HAP-1 (cell line): ENCODE measurements at regions of chr1 and their contacts with region 1.

Region 1: DNA sequence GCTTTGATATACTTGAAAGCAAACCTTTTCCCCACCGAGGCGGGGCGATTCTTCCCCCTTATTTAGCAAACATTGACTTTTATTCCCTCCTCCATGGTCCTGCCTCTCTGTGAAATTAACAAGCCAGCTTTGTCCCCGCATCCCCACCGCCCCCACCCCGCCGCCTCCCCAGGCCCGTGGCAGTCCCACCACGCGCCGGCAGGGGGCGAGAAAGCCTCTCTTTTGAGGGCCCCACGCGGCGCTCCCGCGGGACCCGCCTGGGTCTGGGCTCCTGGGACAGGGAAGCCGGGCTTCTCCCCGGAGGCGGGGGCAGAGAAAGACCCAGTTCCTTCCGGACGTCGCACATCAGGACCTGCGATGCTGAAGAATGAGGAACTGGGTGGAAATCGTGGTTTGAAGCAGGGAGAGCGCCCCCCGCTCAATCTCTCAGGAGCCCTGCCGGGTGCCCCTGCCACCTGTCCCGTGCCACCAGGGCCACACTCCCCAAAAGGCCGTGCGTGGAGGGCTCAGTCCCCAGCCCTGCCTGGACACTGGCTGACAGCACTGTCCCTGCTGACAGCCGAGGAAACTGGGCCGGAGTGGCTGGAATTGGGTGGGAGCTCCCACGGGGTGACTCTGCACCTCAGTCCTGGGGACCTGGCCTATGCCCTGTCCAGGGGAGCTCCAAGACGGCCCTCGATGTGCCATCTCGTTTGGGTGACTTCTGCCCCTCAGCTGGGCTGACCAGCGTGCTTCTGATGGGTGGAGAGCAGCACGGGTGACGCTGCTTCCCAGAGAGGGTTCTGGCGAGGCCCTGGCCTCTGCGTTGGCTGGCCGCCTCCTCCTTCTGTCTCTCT is 8.6 kb upstream of the ACTRT2 start:
- DNase-seq: peak; percentile 19 to 82
- H3K4me3 ChIP-seq: no peak overlapping the region
- H3K4me1 ChIP-seq: no peaks in the 10 kb centered on the region
- H3K27me3 ChIP-seq: peaks cover 17% of the 10 kb centered on the region

Region 2: GRCh38 chr1:2936559-2937515 is 75.8 kb before region 1 on chr1:
- in situ Hi-C with region 1: no loop called
- DNase-seq: no peak
- H3K4me3 ChIP-seq: no peak overlapping the region
- H3K4me1 ChIP-seq: no peaks in the 10 kb centered on the region
- H3K27me3 ChIP-seq: peaks cover 29% of the 10 kb centered on the region

Region 3: GRCh38 chr1:3428899-3429298 is 416.2 kb after region 1 on chr1:
- in situ Hi-C with region 1: loop called (anchors 5 kb)
- DNase-seq: no peak
- H3K4me3 ChIP-seq: no peak overlapping the region
- H3K4me1 ChIP-seq: no peaks in the 10 kb centered on the region
- H3K27me3 ChIP-seq: no peaks in the 10 kb centered on the region